ENCODE measurements at regions of chr15 and their contacts with region 1.

Region 1: DNA sequence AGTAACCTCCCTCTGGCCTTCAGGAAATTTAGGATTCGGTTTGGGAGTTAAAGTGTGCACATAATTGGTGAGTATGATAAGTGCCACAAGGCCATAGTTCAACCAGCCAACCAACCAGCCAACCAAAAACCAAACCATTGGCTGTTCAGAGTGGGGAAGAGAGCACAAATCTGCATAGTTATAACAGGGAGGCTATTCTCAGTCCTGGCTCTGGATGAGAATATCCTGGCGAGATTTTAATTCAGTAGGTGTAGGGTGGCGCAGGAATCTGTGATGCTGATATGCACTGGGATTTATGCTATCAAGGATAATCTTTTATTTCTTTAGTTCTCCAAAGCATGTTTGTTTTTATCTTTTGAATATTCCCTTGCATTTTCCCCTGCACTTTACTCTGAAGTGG is 49.1 kb downstream of the AKAP13 start:
- DNase-seq: no peak
- ATAC-seq: no peak
- H3K4me3 ChIP-seq: no peak overlapping the region
- H3K27ac ChIP-seq: no peak overlapping the region
- H3K4me1 ChIP-seq: no peaks in the 10 kb centered on the region
- H3K27me3 ChIP-seq: no peaks in the 10 kb centered on the region
- CTCF ChIP-seq: no peak
- POLR2A ChIP-seq: no peak
- RAD21 ChIP-seq: no peak

Region 2: DNA sequence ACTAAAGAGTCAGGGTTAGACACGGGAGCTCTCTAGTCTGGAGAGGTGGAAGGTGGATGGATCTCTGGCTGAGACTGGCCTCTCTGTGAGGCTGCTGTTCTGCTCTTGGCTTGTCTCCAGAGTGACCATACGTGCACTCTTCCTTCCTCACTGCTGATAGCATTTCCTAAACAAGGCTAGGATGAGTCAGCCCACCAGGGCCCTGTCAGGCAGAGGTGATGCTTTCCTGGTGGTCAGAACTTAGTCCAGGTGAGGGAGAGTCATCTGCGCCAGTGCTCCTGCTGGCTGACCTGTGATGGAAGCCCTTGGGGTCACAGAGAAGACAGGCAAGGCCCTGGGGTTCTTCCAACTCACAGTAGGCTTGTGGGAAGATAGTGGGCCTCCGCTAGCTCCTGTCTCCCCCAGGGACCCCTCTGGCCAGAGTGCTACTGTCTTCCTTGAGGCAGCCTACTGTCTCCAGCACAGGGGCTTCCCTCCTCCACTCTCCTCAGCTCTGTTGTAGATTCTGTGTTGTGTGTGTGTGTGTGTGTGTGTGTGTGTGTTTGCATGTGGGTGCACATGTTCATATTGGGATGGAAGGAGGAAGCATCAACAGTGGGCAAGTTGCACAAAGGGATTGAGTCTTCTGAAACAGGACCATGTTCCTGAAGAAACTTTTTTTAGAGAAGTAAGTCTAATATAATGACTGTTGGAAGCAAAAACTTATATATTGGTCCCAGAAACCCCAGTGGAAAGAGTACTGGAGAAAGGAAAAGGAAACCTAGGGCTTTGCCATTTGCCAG is 595.9 kb before region 1 on chr15:
- CTCF ChIA-PET with region 1: no interaction called
- POLR2A ChIA-PET with region 1: no interaction called
- RAD21 ChIA-PET with region 1: no interaction called
- intact Hi-C with region 1: no loop called
- DNase-seq: no peak
- ATAC-seq: 0 out of 2 replicates have a peak, but pooled peaks have one; percentile 25
- H3K4me3 ChIP-seq: no peak overlapping the region
- H3K27ac ChIP-seq: no peak overlapping the region
- H3K4me1 ChIP-seq: peaks cover 0 to 9% of the 10 kb centered on the region in 2 experiments; a peak in 2 of 4 replicates
- H3K27me3 ChIP-seq: no peaks in the 10 kb centered on the region
- CTCF ChIP-seq: no peak
- POLR2A ChIP-seq: no peak
- RAD21 ChIP-seq: no peak

Region 3: GRCh38 chr15:85440451-85440850 is 10.9 kb after region 1 on chr15:
- CTCF ChIA-PET with region 1: no interaction called
- POLR2A ChIA-PET with region 1: no interaction called
- RAD21 ChIA-PET with region 1: no interaction called
- intact Hi-C with region 1: loop called (anchors 1 kb)
- DNase-seq: no peak
- ATAC-seq: no peak
- H3K4me3 ChIP-seq: no peak overlapping the region
- H3K27ac ChIP-seq: no peak overlapping the region
- H3K4me1 ChIP-seq: peaks cover 12 to 19% of the 10 kb centered on the region in 2 experiments
- H3K27me3 ChIP-seq: no peaks in the 10 kb centered on the region
- CTCF ChIP-seq: no peak
- POLR2A ChIP-seq: no peak
- RAD21 ChIP-seq: no peak

Measured in HCT116 (cell line).